Activated CD4-positive, alpha-beta memory T cell treated with anti-CD3 and anti-CD28 coated beads, Interleukin-2, amount 10 ng/mL, durations not matched to agents 7 days and 5 days (primary cell): ENCODE measurements at regions of chr11 and their contacts with region 1.

Region 1: DNA sequence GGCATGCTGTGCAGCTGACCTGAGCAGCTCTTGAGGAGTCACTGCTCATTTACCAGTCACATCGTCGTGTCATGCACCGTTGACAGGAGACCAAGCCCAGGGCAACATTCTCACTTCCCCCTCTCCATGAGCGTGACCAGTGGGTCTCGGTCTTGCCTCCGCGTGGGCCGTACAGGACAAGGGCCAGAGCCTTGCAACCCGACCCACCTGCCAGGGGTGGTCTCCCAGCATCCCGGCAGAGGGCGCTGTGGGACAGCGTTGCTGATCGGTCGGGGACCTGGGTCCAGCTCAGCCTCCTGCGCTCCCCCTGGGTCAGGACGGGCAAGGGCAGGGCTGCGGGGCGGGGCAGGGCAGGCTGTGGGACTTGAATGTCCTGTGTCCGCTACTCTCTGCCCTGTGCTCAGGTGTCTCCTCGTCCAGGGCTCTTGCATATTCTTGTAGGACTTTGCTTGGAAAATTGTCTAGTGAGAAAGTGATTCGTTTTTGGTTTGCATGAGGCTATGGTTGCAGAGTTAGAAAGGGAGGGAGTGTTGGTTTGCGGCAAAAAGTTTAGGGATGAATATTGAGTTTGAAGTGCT is 16.2 kb downstream of the EIF4G2 start:
- DNase-seq: peak; percentile 86
- H3K4me3 Mint-ChIP-seq: no peak overlapping the region
- H3K27ac Mint-ChIP-seq: no peak overlapping the region
- H3K4me1 Mint-ChIP-seq: peaks cover 25% of the 10 kb centered on the region
- H3K27me3 Mint-ChIP-seq: peaks cover 5% of the 10 kb centered on the region

Region 2: GRCh38 chr11:10490398-10491241 is 301.9 kb before region 1 on chr11:
- CTCF ChIA-PET with region 1: no interaction called
- POLR2A ChIA-PET with region 1: no interaction called
- DNase-seq: no peak
- H3K4me3 Mint-ChIP-seq: no peak overlapping the region
- H3K27ac Mint-ChIP-seq: peak overlapping the region; percentile 7
- H3K4me1 Mint-ChIP-seq: peaks cover 9% of the 10 kb centered on the region
- H3K27me3 Mint-ChIP-seq: no peaks in the 10 kb centered on the region

Region 3: DNA sequence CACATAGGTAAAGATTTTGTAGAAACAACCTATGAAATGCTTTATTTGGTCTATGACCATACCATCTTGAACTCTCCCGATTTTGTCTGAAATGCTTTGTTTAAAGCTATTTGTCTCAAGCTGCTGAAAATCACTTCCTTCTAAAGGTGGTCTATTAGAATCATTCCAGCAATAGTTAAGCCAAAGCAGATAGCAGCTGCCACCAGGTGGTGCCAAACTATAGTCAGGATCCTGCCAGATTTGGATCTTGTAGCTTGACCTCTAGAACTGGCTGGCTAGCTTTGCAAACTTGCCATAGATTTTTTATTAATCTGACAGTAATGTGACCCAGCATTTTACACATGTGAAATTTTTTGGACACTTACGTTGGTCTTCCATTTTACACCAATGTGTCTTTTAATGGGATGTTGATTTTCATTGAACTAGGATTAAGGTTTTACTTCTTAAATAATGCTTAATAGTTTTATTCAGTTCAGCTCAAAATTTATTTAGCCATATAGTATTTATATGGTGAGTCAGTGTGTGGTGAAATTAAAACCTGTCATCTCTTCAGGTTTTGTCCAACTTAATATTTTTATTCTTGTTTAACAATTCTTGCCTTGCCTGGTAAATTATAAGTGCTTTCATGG is 21.7 kb before region 1 on chr11:
- CTCF ChIA-PET with region 1: interaction called, 22 read pairs
- POLR2A ChIA-PET with region 1: no interaction called
- DNase-seq: no peak
- H3K4me3 Mint-ChIP-seq: no peak overlapping the region
- H3K27ac Mint-ChIP-seq: no peak overlapping the region
- H3K4me1 Mint-ChIP-seq: no peaks in the 10 kb centered on the region
- H3K27me3 Mint-ChIP-seq: no peaks in the 10 kb centered on the region

Region 4: DNA sequence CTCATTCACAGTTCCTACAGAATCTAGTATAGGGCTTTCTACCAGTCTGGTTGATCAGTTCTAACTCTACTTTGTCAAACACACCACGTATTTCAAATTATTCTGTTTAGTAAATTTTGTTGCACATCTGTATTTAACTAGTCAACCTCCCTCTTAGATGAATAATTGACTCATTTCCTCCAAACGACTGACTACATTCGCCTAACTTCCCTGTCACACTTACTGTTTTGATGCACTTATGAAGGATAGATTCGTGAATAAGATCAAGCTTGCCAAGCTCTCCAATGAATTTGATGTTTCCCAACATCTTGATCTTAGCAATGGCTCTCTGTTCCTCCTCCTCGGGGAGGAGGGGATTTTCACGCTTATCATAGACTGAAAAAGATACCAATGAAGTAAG is 11.2 kb after region 1 on chr11:
- CTCF ChIA-PET with region 1: interaction called, 57 read pairs
- POLR2A ChIA-PET with region 1: interaction called, 111 read pairs
- DNase-seq: no peak
- H3K4me3 Mint-ChIP-seq: no peak overlapping the region
- H3K27ac Mint-ChIP-seq: no peak overlapping the region
- H3K4me1 Mint-ChIP-seq: peaks cover 76% of the 10 kb centered on the region
- H3K27me3 Mint-ChIP-seq: no peaks in the 10 kb centered on the region

Region 5: GRCh38 chr11:10838083-10838482 is 45.6 kb after region 1 on chr11:
- CTCF ChIA-PET with region 1: no interaction called
- POLR2A ChIA-PET with region 1: no interaction called
- DNase-seq: no peak
- H3K4me3 Mint-ChIP-seq: no peak overlapping the region
- H3K27ac Mint-ChIP-seq: no peak overlapping the region
- H3K4me1 Mint-ChIP-seq: no peaks in the 10 kb centered on the region
- H3K27me3 Mint-ChIP-seq: no peaks in the 10 kb centered on the region

Region 6: DNA sequence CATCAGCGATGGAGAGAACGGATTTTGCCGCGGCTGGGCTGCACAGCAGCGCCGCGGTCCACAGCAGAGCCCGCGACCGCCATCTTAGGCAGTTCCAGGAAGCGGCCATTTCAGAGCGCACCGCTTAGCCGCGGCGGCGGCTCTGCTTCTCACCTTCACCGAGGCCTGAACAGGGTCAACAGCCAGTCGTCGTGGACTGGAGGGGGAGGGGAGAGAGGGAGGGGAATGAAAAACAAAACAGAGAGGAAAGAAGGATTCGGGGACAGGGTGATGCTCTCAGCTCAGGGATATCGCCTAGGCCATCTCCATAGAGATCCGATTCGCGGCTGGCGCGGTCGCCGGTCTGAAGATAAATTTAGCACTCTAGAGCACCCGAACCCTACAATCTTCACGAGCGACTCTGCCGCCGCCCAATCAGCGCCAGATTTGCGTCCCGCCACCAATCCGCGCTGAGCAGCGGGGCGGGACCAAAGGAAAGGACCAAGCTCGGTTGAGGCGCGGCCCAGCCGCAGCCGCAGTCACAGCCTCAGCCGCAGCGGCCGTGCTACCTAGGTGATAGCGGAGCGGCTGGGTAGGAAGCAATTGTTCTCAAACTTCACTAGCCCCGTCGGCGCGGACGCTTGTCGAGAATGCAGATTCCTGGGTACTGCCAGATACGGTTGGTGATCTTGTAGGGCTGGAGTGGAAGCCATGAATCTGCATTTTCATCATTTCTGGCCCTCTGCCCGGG is 65.4 kb after region 1 on chr11 and contains the start of gene ZBED5:
- CTCF ChIA-PET with region 1: interaction called, 4 read pairs
- POLR2A ChIA-PET with region 1: interaction called, 17 read pairs
- DNase-seq: peak; percentile 98
- H3K4me3 Mint-ChIP-seq: peak within 1 kb of the TSS; percentile 100
- H3K27ac Mint-ChIP-seq: peak within 1 kb of the TSS; percentile 100
- H3K4me1 Mint-ChIP-seq: peaks cover 45% of the 10 kb centered on the region
- H3K27me3 Mint-ChIP-seq: no peaks in the 10 kb centered on the region
- total RNA-seq, gene ZBED5: 44.2 to 45.6 TPM

Region 7: GRCh38 chr11:11028017-11028692 is 235.7 kb after region 1 on chr11:
- CTCF ChIA-PET with region 1: interaction called, 105 read pairs
- POLR2A ChIA-PET with region 1: no interaction called
- DNase-seq: peak; percentile 81
- H3K4me3 Mint-ChIP-seq: no peak overlapping the region
- H3K27ac Mint-ChIP-seq: no peak overlapping the region
- H3K4me1 Mint-ChIP-seq: no peaks in the 10 kb centered on the region
- H3K27me3 Mint-ChIP-seq: peaks cover 13% of the 10 kb centered on the region